ENCODE measurements at regions of chr3 and their contacts with region 1.

Region 1: GRCh38 chr3:192816351-192816750 is 89.0 kb upstream of the FGF12 start:
- DNase-seq: peak; percentile 65
- H3K4me3 Mint-ChIP-seq: no peak overlapping the region
- H3K27ac Mint-ChIP-seq: no peak overlapping the region
- H3K4me1 Mint-ChIP-seq: peaks cover 35% of the 10 kb centered on the region
- H3K27me3 Mint-ChIP-seq: no peaks in the 10 kb centered on the region
- CTCF ChIP-seq: peak; percentile 64

Region 2: DNA sequence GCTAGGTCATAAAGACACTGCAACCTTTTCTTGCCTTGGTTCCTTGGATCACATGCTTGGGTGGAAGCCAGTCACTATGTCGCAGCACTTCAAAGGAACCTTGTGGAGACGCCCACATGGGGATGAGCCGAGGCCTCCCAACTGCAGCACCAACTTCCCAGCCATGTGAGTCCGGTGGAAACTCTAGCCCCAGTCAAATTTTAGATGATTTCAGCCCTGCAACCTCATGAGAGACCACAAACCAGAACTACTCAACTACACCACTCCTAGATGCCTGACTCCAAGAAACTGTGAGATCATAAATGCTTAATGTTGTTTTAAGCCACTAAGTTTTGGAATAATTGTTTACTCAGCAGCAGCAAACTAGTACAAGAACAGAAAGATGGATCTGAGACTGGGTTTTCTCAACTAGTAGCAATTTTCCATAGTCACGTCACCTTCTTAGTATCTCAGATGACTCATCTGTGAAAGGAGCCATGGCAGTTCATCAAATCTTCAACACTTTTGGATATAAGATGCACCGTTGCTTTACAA is 14.8 kb after region 1 on chr3:
- CTCF ChIA-PET with region 1: interaction called, 10 read pairs
- POLR2A ChIA-PET with region 1: interaction called, 3 read pairs
- intact Hi-C with region 1: no loop called
- DNase-seq: peak; percentile 47
- H3K4me3 Mint-ChIP-seq: no peak overlapping the region
- H3K27ac Mint-ChIP-seq: no peak overlapping the region
- H3K4me1 Mint-ChIP-seq: peaks cover 38% of the 10 kb centered on the region
- H3K27me3 Mint-ChIP-seq: no peaks in the 10 kb centered on the region
- CTCF ChIP-seq: no peak

Region 3: DNA sequence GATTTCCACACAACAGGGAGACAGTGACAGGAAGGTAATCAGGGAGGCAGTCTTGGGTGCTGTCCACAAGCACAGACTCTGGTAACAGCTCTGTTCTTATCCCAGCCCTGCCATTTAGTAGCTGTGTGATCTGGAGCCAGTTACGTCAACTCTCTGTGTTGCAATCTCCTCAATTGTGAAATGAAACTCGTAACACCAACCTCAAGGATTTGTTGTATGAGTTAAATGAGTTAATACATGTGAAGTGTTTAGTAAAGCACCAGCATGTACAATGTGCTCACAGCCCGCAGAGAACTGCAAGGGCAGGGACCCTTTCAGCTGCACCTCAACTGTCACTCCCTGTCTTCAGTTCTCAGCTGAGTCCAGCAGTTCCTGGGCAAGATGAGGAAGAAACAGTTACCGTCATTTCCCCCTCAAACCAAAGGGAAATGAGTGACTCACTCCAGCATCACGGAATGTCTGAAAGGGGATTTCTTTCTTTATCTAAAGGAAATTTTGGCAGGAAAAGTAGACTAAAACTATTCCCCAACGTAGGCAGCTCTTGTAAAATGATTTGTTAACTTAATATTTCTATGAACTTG is 141.2 kb after region 1 on chr3:
- CTCF ChIA-PET with region 1: interaction called, 6 read pairs
- POLR2A ChIA-PET with region 1: interaction called, 3 read pairs
- intact Hi-C with region 1: loop called (anchors 1 kb)
- DNase-seq: peak; percentile 97
- H3K4me3 Mint-ChIP-seq: peak overlapping the region; percentile 49
- H3K27ac Mint-ChIP-seq: peak overlapping the region; percentile 90
- H3K4me1 Mint-ChIP-seq: peaks cover 35% of the 10 kb centered on the region
- H3K27me3 Mint-ChIP-seq: no peaks in the 10 kb centered on the region
- CTCF ChIP-seq: no peak

Region 4: DNA sequence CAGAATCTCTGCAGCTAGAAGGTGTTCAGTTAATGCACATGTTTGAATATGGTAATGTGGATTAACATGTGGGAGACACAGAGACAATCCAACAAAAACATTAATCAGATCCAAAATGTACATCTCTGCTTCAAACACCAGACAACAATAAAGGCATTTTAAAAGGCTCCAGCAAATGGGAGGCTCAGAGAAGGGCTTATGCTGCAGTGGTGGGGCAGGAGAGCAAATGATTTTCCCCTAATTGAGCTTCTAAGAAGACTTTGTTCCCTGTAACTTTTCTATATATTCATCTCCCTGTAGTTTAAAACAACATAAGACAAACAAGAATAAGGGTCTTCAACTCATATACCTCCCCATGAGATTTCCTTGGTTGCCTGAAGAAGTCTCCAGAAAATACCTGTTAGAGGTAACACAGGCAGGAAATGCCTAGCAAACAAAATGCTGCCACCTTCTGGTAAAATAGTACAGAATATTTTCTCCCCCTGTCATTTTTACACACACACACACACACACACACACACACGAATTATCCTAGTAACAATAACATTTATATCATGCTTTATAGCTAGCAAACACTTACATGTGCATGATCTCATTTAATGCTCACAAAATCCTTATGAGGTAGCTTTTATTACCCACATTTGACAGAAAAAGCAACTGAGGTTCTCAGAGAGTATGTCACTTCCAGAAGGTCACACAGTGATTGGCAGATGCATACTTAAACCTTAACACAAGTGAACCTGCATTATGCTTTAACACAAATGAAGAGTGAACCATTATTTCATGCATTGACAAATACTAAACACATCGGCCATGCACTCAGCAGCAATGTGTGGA is 224.7 kb after region 1 on chr3:
- CTCF ChIA-PET with region 1: interaction called, 489 read pairs
- POLR2A ChIA-PET with region 1: interaction called, 5 read pairs
- intact Hi-C with region 1: loop called (anchors 1 kb)
- DNase-seq: peak; percentile 62
- H3K4me3 Mint-ChIP-seq: no peak overlapping the region
- H3K27ac Mint-ChIP-seq: no peak overlapping the region
- H3K4me1 Mint-ChIP-seq: no peaks in the 10 kb centered on the region
- H3K27me3 Mint-ChIP-seq: no peaks in the 10 kb centered on the region
- CTCF ChIP-seq: peak; percentile 37

Region 5: GRCh38 chr3:193452338-193452737 is 636.0 kb after region 1 on chr3:
- CTCF ChIA-PET with region 1: interaction called, 37 read pairs
- POLR2A ChIA-PET with region 1: interaction called, 3 read pairs
- intact Hi-C with region 1: loop called (anchors 2 kb)
- DNase-seq: peak; percentile 7
- H3K4me3 Mint-ChIP-seq: no peak overlapping the region
- H3K27ac Mint-ChIP-seq: no peak overlapping the region
- H3K4me1 Mint-ChIP-seq: no peaks in the 10 kb centered on the region
- H3K27me3 Mint-ChIP-seq: peaks cover 50% of the 10 kb centered on the region
- CTCF ChIP-seq: peak; percentile 21

Measured in MCF 10A (cell line).